ENCODE measurements at regions of chr1 and their contacts with region 1.

Region 1: GRCh38 chr1:107877092-107877491 is 87.9 kb downstream of the VAV3 start:
- DNase-seq: no peak
- H3K4me3 Mint-ChIP-seq: no peak overlapping the region
- H3K27ac Mint-ChIP-seq: no peak overlapping the region
- H3K4me1 Mint-ChIP-seq: peaks cover 9% of the 10 kb centered on the region
- H3K27me3 Mint-ChIP-seq: peaks cover 12% of the 10 kb centered on the region
- CTCF ChIP-seq: no peak

Region 2: GRCh38 chr1:107936498-107937481 is 59.7 kb after region 1 on chr1:
- CTCF ChIA-PET with region 1: no interaction called
- intact Hi-C with region 1: loop called (anchors 10 kb)
- DNase-seq: peak; percentile 61
- H3K4me3 Mint-ChIP-seq: peak overlapping the region; percentile 34
- H3K27ac Mint-ChIP-seq: peak overlapping the region; percentile 30
- H3K4me1 Mint-ChIP-seq: peaks cover 17% of the 10 kb centered on the region
- H3K27me3 Mint-ChIP-seq: peaks cover 12% of the 10 kb centered on the region
- CTCF ChIP-seq: no peak

Region 3: DNA sequence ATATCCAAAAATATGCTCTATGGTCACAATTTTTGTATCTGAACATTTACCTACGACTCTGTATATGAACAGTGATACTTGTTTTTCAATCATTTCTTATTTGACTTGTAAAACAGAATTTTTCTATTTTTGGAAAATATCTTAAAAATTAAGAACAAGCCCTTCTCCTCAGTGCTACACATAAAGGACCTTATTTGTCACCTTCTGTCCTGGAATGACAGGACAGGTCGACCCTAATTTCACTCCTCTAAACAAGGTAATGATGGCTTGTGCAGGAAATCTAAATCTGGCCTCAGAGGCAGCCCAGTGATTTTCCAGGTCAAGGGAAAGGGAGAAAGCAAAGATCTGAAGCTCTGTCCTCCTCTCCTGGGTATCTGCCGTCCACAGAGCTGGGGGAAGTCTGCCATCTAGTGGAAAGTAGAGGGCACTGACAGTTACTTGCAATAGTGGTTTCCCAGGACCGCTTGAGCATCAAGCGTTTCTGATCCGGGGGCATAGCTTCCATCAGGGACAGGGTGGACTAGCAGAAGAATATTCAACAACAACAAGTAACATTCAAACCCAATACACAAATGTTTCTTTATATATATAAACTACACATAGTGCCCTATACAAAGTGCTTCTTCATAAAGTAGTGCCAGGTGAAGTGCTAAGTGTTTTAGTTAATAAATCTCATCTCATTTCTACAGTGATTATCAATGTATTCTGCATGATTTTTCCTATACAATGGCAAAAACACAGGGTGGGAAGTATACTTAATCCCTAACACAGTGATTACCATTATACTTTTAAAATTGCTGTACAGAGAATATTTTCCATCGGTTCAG is 248.4 kb after region 1 on chr1:
- CTCF ChIA-PET with region 1: no interaction called
- intact Hi-C with region 1: loop called (anchors 10 kb)
- DNase-seq: peak; percentile 45
- H3K4me3 Mint-ChIP-seq: no peak overlapping the region
- H3K27ac Mint-ChIP-seq: no peak overlapping the region
- H3K4me1 Mint-ChIP-seq: no peaks in the 10 kb centered on the region
- H3K27me3 Mint-ChIP-seq: peaks cover 29% of the 10 kb centered on the region
- CTCF ChIP-seq: peak; percentile 80

Measured in Calu3 (cell line).